Naive thymus-derived CD4-positive, alpha-beta T cell (primary cell): ENCODE measurements at regions of chr1 and their contacts with region 1.

Region 1: DNA sequence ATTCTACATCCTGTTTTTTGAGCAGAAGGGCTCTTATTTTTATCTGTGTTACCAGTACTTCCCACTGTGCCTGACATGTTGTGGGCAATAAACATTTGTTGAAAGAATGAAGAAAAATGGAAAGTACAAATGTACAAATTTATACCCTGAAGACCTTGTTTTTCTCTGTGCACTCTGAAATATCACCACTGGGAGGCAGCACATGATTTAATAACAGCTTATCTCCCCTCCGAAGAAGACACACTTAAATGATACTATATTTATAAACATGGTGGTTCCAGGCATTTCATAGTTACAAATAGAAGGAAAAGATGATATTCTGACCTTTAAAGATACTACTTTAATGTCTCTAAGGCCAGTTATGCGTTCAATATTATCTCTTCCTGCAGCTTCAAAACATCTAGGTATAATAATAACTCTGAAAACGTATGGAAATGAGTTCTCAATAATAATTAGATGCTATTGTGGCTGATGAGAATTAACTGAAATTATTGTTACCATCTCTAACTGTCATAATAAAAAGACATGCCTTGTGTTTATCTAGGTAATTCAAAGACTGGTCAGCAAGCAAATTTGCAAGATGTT is 12.8 kb downstream of the DYNLT5 start:
- DNase-seq: peak in 7 of 9 donors; percentile 48 to 68 (median 62)
- ATAC-seq: peak; percentile 81
- H3K4me3 ChIP-seq: no peak overlapping the region
- H3K4me3 Mint-ChIP-seq: no peak overlapping the region
- H3K27ac ChIP-seq: no peak overlapping the region
- H3K27ac Mint-ChIP-seq: no peak overlapping the region
- H3K4me1 ChIP-seq: no peaks in the 10 kb centered on the region
- H3K4me1 Mint-ChIP-seq: peaks cover 7 to 21% (median 15%) of the 10 kb centered on the region in 7 donors
- H3K27me3 ChIP-seq: no peaks in the 10 kb centered on the region
- H3K27me3 Mint-ChIP-seq: peaks cover 0 to 3% (median 0%) of the 10 kb centered on the region in 5 donors

Region 2: DNA sequence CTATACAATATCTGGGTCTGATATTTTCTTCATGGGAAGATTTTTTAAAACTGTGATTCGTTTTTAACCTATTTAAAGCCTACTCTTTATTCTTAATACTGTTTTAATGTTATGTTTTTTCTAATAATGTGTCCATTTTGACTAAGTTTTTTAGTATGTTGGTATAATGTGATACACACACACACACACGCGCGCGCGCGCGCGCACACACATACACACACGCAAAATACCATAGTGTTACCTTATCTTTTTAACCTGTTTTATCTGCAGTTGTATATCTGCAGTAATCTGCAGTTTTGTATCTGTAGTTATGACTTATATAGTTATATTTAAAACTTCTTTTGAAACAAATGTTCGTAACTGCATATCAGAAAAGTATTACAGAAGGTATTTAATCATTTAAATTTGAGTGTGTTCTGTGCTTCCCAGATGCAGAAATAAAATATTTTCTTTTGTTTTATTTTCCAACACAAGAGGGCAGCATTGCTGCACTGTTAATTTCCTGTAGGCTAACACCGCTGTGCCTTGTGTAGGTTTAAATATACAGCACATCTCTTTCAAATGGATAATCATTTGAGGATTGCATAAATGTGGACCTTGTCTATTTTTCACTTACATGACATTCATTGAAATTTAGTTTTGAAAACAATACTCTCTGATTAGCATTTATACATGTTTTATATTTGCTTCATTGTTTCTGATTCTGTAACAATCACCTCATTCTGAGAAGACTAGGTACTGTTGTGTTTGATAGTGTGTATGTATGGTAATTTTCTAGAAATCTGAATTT is 806.3 kb before region 1 on chr1:
- CTCF ChIA-PET with region 1: no interaction called
- POLR2A ChIA-PET with region 1: no interaction called
- intact Hi-C with region 1: loop called in 1 of 2 experiments (anchors 5 kb)
- DNase-seq: peak in 7 of 9 donors; percentile 23 to 75 (median 64)
- ATAC-seq: peak; percentile 80
- H3K4me3 ChIP-seq: no peak overlapping the region
- H3K4me3 Mint-ChIP-seq: no peak overlapping the region
- H3K27ac ChIP-seq: no peak overlapping the region
- H3K27ac Mint-ChIP-seq: no peak overlapping the region
- H3K4me1 ChIP-seq: no peaks in the 10 kb centered on the region
- H3K4me1 Mint-ChIP-seq: peaks cover 0 to 12% (median 0%) of the 10 kb centered on the region in 7 donors
- H3K27me3 ChIP-seq: no peaks in the 10 kb centered on the region
- H3K27me3 Mint-ChIP-seq: peaks cover 0 to 7% (median 3%) of the 10 kb centered on the region in 5 donors

Region 3: DNA sequence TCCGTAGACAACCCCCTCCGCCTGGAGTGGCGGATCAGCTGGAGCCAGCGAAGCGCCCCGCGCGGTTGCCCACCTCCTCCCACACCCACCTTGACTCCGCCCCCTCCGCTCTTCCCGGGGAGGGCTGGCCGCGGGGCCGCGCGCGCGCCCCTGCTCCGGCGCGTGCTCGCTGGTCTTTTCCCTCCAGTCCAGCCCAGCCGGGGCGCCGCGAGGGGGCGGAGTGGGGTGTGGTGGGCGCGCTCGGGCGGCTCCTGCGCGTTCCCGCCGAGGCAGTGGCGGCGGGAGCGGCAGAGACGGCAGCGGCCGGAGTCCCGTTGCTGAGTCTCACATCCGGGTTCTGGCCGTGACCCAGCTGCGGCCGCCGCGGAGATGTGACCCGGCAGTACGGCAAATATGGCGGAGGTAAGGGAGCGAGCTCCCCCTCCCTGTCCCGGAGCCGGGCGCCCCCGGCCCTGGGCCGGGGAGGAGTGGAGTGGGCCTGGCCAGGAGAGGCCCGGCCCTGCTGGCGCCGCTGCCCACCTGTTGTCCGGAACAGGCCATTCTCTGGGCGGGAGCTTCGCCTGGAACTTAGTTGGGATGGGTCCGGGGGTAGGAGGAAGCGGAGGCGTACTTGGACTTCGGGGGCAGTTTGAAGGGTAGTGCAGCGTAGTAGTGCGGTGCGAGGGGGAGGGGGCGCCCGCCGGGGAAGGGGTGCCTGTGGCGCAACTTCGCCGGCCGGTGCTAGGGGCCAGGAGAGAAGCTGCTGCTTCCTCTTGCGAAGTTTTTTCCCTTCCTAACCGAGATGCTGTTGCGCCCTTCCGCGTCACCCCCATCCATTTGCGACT is 165.1 kb after region 1 on chr1:
- CTCF ChIA-PET with region 1: interaction called, 8 read pairs
- POLR2A ChIA-PET with region 1: interaction called, 4 read pairs
- intact Hi-C with region 1: loop called (anchors 1 to 2 kb)
- DNase-seq: peak; percentile 88 to 97 (median 92)
- ATAC-seq: peak; percentile 88
- H3K4me3 ChIP-seq: peak overlapping the region; percentile 69
- H3K4me3 Mint-ChIP-seq: peak overlapping the region; percentile 85 to 98 (median 92)
- H3K27ac ChIP-seq: peak overlapping the region; percentile 91
- H3K27ac Mint-ChIP-seq: peak overlapping the region; percentile 79 to 95 (median 90)
- H3K4me1 ChIP-seq: peaks cover 45 to 48% of the 10 kb centered on the region in 2 donors
- H3K4me1 Mint-ChIP-seq: peaks cover 38 to 88% (median 70%) of the 10 kb centered on the region in 7 donors
- H3K27me3 ChIP-seq: no peaks in the 10 kb centered on the region
- H3K27me3 Mint-ChIP-seq: no peaks in the 10 kb centered on the region

Region 4: GRCh38 chr1:66981679-66982078 is 216.6 kb after region 1 on chr1:
- CTCF ChIA-PET with region 1: interaction called, 5 read pairs
- POLR2A ChIA-PET with region 1: no interaction called
- intact Hi-C with region 1: loop called (anchors 2 to 5 kb)
- DNase-seq: peak in 7 of 9 donors; percentile 52 to 78 (median 69)
- ATAC-seq: peak; percentile 93
- H3K4me3 ChIP-seq: peak overlapping the region; percentile 22
- H3K4me3 Mint-ChIP-seq: peak overlapping the region; percentile 64 to 84 (median 80)
- H3K27ac ChIP-seq: peak overlapping the region; percentile 78
- H3K27ac Mint-ChIP-seq: peak overlapping the region; percentile 83 to 94 (median 93)
- H3K4me1 ChIP-seq: peaks cover 0 to 8% of the 10 kb centered on the region in 2 donors
- H3K4me1 Mint-ChIP-seq: peaks cover 6 to 48% (median 37%) of the 10 kb centered on the region in 7 donors
- H3K27me3 ChIP-seq: no peaks in the 10 kb centered on the region
- H3K27me3 Mint-ChIP-seq: no peaks in the 10 kb centered on the region

Region 5: DNA sequence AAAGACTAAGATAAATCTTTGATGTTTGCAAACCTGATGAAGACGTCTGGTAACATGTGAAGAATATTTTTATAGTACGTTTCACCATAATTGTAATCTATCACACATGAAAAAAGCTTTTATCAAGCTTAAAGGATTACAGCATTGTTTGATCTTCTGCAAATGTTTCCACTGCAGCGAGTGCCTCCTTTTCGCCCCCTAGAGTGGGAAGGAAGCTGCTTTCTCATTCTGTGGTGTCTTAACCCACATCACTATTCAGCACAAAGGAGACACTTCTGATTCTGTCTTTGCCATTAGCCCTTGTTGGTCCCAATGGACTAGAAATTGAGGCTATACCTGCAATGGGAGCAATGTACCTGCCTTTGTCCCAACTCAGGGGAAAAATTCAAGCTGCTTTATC is 496.6 kb after region 1 on chr1:
- CTCF ChIA-PET with region 1: no interaction called
- POLR2A ChIA-PET with region 1: no interaction called
- intact Hi-C with region 1: loop called in 1 of 2 experiments (anchors 1 kb)
- DNase-seq: peak in 8 of 9 donors; percentile 24 to 67 (median 57)
- ATAC-seq: peak; percentile 52
- H3K4me3 ChIP-seq: no peak overlapping the region
- H3K4me3 Mint-ChIP-seq: peak overlapping the region in 7 of 10 donors; percentile 17 to 73 (median 34)
- H3K27ac ChIP-seq: no peak overlapping the region
- H3K27ac Mint-ChIP-seq: peak overlapping the region in 1 of 9 donors; percentile 8
- H3K4me1 ChIP-seq: peaks cover 17 to 22% of the 10 kb centered on the region in 2 donors
- H3K4me1 Mint-ChIP-seq: peaks cover 12 to 44% (median 31%) of the 10 kb centered on the region in 7 donors
- H3K27me3 ChIP-seq: no peaks in the 10 kb centered on the region
- H3K27me3 Mint-ChIP-seq: no peaks in the 10 kb centered on the region